Posterior cingulate gyrus (tissue), 11 donors: ENCODE measurements at regions of chr1 and their contacts with region 1.

Region 1: GRCh38 chr1:157335056-157335455 is 196.9 kb upstream of the ETV3 start:
- DNase-seq: no peak

Region 2: GRCh38 chr1:157269656-157270375 is 65.2 kb before region 1 on chr1:
- intact Hi-C with region 1: loop called (anchors 10 kb)
- DNase-seq: no peak

Region 3: DNA sequence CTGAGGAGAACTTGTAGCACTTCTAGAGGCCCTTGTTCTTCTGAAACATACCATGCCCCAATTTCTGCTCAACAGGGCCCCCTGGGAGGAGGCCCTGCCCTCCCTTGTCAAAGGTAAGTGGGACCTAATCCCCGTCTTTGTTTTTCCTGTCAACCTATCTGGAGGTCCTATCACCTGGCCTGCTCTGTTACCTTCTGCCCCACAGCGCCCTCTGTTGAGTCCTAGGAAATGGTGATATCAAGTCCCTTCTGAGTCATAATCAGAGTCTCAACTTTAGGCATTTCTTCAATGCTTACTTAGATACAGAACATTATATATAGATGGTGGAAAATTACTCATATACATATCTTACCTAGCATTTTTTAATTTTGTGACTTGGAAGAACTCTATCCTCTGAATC is 291.0 kb after region 1 on chr1:
- intact Hi-C with region 1: no loop called
- DNase-seq: no peak